ENCODE measurements at regions of chr11 and their contacts with region 1.

Region 1: GRCh38 chr11:19160847-19161246 is 40.9 kb downstream of the CSRP3 start:
- DNase-seq: no peak

Region 2: DNA sequence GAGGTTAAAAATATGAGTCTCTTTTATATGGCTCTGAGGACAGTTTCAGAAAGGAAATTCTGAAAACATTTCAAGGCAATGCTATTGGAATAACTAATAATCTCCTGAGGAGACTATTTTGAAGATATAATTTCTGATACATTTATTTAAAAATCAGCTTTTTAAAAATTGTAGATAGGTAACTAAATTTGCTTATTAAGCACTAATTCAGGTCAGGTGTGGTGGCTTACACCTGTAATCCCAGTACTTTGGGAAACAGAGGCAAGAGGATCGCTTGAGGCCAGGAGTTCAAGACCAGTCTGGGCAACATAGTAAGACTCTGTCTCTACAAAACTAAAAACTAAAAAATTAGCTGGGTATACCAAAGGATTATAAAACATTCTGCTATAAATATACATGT is 26.8 kb before region 1 on chr11:
- intact Hi-C with region 1: loop called (anchors 2 kb)
- DNase-seq: no peak

Measured in posterior cingulate gyrus (tissue), 11 donors.